ENCODE measurements at regions of chr1 and their contacts with region 1.

Region 1: GRCh38 chr1:165288350-165289148 is 68.0 kb downstream of the LMX1A start:
- DNase-seq: no peak
- ATAC-seq: no peak

Region 2: GRCh38 chr1:165114022-165114888 is 174.3 kb before region 1 on chr1:
- intact Hi-C with region 1: no loop called
- DNase-seq: no peak
- ATAC-seq: no peak

Region 3: GRCh38 chr1:165152727-165153126 is 135.8 kb before region 1 on chr1:
- intact Hi-C with region 1: loop called (anchors 10 kb)
- DNase-seq: no peak
- ATAC-seq: no peak

Measured in Right ventricle myocardium superior (tissue), 1 donor.